ENCODE measurements at regions of chr2 and their contacts with region 1.

Region 1: GRCh38 chr2:170409164-170409535 is 231.2 kb downstream of the MYO3B start:
- DNase-seq: peak; percentile 83
- H3K4me3 Mint-ChIP-seq: no peak overlapping the region
- H3K27ac Mint-ChIP-seq: no peak overlapping the region
- H3K4me1 Mint-ChIP-seq: peaks cover 7% of the 10 kb centered on the region
- H3K27me3 Mint-ChIP-seq: peaks cover 41% of the 10 kb centered on the region

Region 2: GRCh38 chr2:170191166-170191866 is 217.8 kb before region 1 on chr2:
- CTCF ChIA-PET with region 1: no interaction called
- DNase-seq: no peak
- H3K4me3 Mint-ChIP-seq: no peak overlapping the region
- H3K27ac Mint-ChIP-seq: no peak overlapping the region
- H3K4me1 Mint-ChIP-seq: no peaks in the 10 kb centered on the region
- H3K27me3 Mint-ChIP-seq: peaks cover 28% of the 10 kb centered on the region

Region 3: GRCh38 chr2:170324640-170325046 is 84.5 kb before region 1 on chr2:
- CTCF ChIA-PET with region 1: interaction called, 12 read pairs
- DNase-seq: peak; percentile 64
- H3K4me3 Mint-ChIP-seq: no peak overlapping the region
- H3K27ac Mint-ChIP-seq: no peak overlapping the region
- H3K4me1 Mint-ChIP-seq: no peaks in the 10 kb centered on the region
- H3K27me3 Mint-ChIP-seq: peaks cover 4% of the 10 kb centered on the region

Region 4: DNA sequence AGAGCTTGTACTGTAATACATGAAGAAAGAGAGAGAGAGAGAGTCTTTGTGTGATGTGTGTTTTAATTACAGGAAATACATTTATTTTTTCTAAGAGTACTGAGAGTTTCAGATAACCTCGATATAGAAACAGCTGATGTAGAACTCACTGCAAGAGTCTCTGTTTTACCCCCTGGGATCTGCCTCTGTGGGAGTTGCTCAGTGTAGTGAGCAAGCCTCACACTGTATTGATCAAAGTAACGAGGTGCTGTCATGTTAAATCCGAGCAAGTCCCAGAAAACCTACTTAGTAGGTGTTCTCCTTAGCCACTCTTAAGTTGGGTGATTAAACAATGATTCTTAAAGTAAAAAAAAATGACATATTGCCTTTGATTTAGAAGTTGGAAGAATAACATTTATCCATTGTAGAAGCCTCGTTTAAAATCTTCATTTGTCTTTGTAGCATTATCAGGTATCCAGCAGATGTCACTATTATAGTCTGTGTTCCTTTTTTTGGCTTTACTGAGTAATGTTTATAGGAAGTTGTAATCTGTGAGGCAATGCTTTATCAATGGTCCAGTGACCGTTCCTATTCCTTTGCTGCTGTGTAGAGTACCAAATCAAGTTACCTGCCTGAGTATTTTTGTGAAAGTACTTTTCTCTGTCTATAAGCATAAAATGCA is 12.2 kb before region 1 on chr2:
- CTCF ChIA-PET with region 1: interaction called, 13 read pairs
- DNase-seq: no peak
- H3K4me3 Mint-ChIP-seq: no peak overlapping the region
- H3K27ac Mint-ChIP-seq: no peak overlapping the region
- H3K4me1 Mint-ChIP-seq: no peaks in the 10 kb centered on the region
- H3K27me3 Mint-ChIP-seq: peaks cover 42% of the 10 kb centered on the region

Region 5: DNA sequence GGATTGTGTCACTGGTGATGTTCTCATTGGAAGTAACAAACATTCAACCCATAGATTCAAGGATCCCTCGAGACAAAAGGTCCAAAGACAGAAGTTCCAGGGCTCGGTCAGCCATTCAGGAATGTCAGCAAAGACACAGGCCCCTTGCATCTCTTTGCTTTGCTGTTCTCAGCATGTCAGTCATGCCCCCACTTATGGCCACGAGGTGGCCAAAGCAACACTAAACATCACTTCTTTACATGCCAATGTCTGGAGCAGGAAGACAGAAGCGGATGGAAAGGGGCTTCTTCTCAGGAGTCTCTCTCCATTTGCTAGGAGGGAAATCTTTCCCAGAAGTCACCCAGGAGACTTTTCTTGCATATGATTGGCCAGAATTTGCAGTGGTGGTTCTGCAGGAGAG is 114.4 kb after region 1 on chr2:
- CTCF ChIA-PET with region 1: no interaction called
- DNase-seq: no peak
- H3K4me3 Mint-ChIP-seq: no peak overlapping the region
- H3K27ac Mint-ChIP-seq: no peak overlapping the region
- H3K4me1 Mint-ChIP-seq: peaks cover 5% of the 10 kb centered on the region
- H3K27me3 Mint-ChIP-seq: peaks cover 13% of the 10 kb centered on the region

Measured in activated naive CD4-positive, alpha-beta T cell treated with anti-CD3 and anti-CD28 coated beads, Interleukin-2, amount 10 ng/mL, durations not matched to agents 7 days and 5 days (primary cell).